Gastrocnemius medialis (tissue), 4 donors: ENCODE measurements at regions of chr15 and their contacts with region 1.

Region 1: DNA sequence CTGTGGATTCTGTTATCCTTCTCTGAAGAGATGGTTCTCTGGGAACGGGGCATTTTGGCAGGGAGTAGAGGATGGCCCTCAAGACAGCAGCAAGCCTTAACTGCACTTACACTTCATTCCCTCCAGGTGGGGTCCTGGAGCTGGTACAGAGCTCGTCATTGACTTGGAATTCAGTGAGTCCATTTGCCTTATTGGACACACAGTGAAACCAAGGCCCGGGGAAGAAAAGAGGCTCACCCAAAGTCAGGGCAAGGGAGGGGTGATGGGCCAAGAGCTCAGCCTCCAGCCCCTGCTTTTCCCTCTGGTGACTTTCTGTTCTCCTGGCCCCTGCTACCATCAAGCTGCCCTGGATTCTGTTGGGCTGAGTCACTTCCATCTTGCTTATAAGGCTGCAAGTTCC is 125.6 kb downstream of the ETFA start:
- DNase-seq: peak in 1 of 2 donors; percentile 60
- ATAC-seq: peak; percentile 9 to 34
- H3K4me3 ChIP-seq: no peak overlapping the region
- H3K27ac ChIP-seq: peak overlapping the region in 2 of 4 donors; percentile 19 to 98
- H3K4me1 ChIP-seq: peaks cover 11 to 50% of the 10 kb centered on the region in 2 donors
- H3K27me3 ChIP-seq: no peaks in the 10 kb centered on the region
- CTCF ChIP-seq: peak in 3 of 5 experiments; percentile 28 to 61 (median 44)
- POLR2A ChIP-seq: no peak

Region 2: GRCh38 chr15:77059786-77060361 is 874.2 kb after region 1 on chr15:
- in situ Hi-C with region 1: no loop called
- intact Hi-C with region 1: loop called (anchors 10 kb)
- DNase-seq: no peak
- ATAC-seq: peak; percentile 55 to 71
- H3K4me3 ChIP-seq: no peak overlapping the region
- H3K27ac ChIP-seq: peak overlapping the region; percentile 80 to 93 (median 87)
- H3K4me1 ChIP-seq: peaks cover 73 to 91% of the 10 kb centered on the region in 2 donors
- H3K27me3 ChIP-seq: no peaks in the 10 kb centered on the region
- CTCF ChIP-seq: no peak
- POLR2A ChIP-seq: no peak